CD4-positive, alpha-beta memory T cell (primary cell): ENCODE measurements at regions of chr2 and their contacts with region 1.

Region 1: DNA sequence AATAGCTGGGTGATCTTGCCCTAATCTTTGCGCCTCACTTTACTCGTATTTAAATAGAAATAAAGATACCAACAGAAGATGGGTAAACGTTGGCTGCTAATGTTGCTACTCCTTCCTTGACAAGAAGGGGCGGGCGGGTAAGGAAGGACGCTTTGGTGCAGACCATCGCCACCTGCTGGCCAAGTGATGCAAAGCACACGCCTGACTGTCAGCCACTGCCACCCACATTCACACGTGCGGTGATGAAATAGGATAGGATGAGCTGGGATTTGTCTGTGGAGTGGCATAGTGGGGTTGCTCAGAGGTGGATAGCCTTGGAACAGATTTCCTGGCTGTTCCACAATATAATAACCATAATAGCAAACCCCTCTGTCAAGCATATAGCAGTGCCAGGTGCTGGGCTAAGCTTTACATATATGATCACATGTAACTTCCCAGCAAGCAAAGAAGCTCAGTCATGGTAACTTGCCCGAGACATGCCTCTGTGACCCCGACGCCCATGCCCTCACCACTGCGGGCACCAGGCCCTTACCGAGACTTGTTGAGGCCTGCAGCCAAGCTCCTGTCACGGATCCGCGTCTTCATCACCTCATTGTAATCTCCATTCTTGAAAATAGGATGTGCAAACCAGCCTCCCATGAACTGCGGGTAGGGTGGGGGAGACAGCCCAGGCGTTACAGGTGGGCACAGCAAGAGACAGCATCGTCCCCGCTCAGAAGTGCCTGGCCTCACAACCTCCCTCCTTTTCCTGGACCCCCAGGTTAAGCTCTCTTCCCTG is 39.3 kb downstream of the LCT start:
- DNase-seq: peak; percentile 68 to 70 (median 70)
- H3K4me3 ChIP-seq: no peak overlapping the region
- H3K4me3 Mint-ChIP-seq: peak overlapping the region in 1 of 8 donors; percentile 14
- H3K27ac ChIP-seq: no peak overlapping the region
- H3K27ac Mint-ChIP-seq: peak overlapping the region in 1 of 7 donors; percentile 80
- H3K4me1 ChIP-seq: peaks cover 4% of the 10 kb centered on the region
- H3K4me1 Mint-ChIP-seq: peaks cover 5 to 11% (median 10%) of the 10 kb centered on the region in 4 donors
- H3K27me3 ChIP-seq: no peaks in the 10 kb centered on the region
- H3K27me3 Mint-ChIP-seq: no peaks in the 10 kb centered on the region

Region 2: DNA sequence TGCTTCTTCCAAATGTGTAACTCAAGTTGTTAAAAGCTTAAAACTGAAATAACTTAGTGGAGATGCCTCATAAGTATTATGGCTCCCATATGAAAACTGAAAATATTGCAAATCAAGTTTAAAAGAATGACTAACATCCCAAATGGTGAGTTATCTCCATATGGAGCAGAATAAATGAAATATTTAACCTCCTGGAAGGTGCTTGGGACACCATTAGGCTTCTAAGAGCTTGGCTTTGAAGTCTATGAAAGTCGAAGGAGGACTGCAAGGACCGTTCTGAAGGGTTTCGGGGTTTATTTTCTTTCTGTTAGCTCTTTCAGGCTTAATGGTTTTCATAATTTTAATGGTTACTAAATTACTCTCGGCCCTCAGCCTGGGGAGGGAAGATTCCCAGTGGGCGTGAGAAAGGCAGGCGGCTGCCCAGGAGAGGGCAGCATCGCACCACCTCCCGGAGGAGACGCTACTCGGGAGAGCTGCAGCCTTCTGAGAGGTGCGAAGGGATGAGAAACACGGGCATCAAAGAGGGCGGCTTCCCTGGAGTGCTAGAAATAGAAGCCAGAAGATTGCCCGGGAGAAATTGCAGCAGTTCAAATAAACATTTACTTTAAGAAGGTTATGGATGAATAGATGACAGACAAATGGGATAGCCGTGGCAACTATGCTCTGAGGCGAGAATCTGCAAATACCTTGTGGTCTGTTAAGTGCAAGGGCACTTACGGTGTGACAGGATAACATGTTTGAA is 793.5 kb before region 1 on chr2:
- CTCF ChIA-PET with region 1: interaction called, 39 read pairs
- POLR2A ChIA-PET with region 1: no interaction called
- intact Hi-C with region 1: loop called (anchors 1 kb)
- DNase-seq: peak; percentile 48 to 67 (median 62)
- H3K4me3 ChIP-seq: no peak overlapping the region
- H3K4me3 Mint-ChIP-seq: peak overlapping the region in 3 of 8 donors; percentile 8 to 20 (median 17)
- H3K27ac ChIP-seq: no peak overlapping the region
- H3K27ac Mint-ChIP-seq: peak overlapping the region in 1 of 7 donors; percentile 52
- H3K4me1 ChIP-seq: no peaks in the 10 kb centered on the region
- H3K4me1 Mint-ChIP-seq: peaks cover 2 to 6% (median 5%) of the 10 kb centered on the region in 4 donors
- H3K27me3 ChIP-seq: no peaks in the 10 kb centered on the region
- H3K27me3 Mint-ChIP-seq: peaks cover 8 to 20% of the 10 kb centered on the region in 2 donors

Region 3: DNA sequence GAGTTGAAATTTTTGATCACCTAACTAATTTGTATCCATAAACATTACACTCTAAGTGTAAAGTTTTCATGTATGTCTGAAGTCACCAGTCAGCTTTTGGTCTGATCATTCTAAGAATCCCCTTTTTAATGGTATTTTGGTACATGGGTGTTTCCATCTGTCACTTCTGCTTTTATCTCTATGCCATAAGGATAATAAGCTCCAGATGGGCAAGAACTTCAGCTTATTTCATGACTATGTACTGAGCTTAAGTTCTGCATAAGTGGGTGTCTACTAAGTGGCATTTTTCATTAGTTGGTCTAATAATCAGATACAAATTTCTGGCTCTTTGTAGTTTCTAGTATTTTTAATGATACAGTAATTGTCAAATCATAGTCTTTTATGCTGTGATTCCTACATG is 35.7 kb before region 1 on chr2:
- CTCF ChIA-PET with region 1: interaction called, 12 read pairs
- POLR2A ChIA-PET with region 1: interaction called, 3 read pairs
- intact Hi-C with region 1: no loop called
- DNase-seq: no peak
- H3K4me3 ChIP-seq: no peak overlapping the region
- H3K4me3 Mint-ChIP-seq: no peak overlapping the region
- H3K27ac ChIP-seq: no peak overlapping the region
- H3K27ac Mint-ChIP-seq: no peak overlapping the region
- H3K4me1 ChIP-seq: no peaks in the 10 kb centered on the region
- H3K4me1 Mint-ChIP-seq: peaks cover 0 to 7% (median 3%) of the 10 kb centered on the region in 4 donors
- H3K27me3 ChIP-seq: no peaks in the 10 kb centered on the region
- H3K27me3 Mint-ChIP-seq: no peaks in the 10 kb centered on the region

Region 4: DNA sequence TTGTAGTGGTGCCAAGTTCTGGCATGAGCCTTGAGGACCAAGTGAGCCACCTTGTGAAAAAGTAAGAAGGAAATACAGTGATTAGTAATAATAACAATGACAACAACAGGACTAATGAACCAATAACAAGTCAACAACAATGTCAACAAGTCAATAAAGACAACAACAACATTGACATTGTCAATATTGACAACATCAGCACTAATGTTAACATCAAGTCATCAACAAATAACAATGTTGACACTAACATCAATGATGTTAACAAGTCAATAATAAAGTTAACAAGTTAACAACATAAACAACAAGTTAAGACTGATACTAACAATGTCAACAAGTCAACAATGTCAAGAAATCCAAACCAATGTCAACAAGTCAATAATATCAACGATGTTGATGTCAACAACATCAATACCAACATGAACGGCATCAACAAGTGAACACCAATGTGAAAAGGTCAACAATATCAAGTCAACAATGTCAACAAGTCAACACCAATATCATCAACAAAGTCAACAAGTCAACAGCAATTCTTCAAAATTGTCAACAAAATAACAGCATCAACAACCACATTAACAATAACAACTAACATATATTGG is 15.3 kb after region 1 on chr2:
- CTCF ChIA-PET with region 1: interaction called, 34 read pairs
- POLR2A ChIA-PET with region 1: no interaction called
- intact Hi-C with region 1: no loop called
- DNase-seq: no peak
- H3K4me3 ChIP-seq: no peak overlapping the region
- H3K4me3 Mint-ChIP-seq: no peak overlapping the region
- H3K27ac ChIP-seq: no peak overlapping the region
- H3K27ac Mint-ChIP-seq: no peak overlapping the region
- H3K4me1 ChIP-seq: no peaks in the 10 kb centered on the region
- H3K4me1 Mint-ChIP-seq: no peaks in the 10 kb centered on the region
- H3K27me3 ChIP-seq: no peaks in the 10 kb centered on the region
- H3K27me3 Mint-ChIP-seq: no peaks in the 10 kb centered on the region

Region 5: DNA sequence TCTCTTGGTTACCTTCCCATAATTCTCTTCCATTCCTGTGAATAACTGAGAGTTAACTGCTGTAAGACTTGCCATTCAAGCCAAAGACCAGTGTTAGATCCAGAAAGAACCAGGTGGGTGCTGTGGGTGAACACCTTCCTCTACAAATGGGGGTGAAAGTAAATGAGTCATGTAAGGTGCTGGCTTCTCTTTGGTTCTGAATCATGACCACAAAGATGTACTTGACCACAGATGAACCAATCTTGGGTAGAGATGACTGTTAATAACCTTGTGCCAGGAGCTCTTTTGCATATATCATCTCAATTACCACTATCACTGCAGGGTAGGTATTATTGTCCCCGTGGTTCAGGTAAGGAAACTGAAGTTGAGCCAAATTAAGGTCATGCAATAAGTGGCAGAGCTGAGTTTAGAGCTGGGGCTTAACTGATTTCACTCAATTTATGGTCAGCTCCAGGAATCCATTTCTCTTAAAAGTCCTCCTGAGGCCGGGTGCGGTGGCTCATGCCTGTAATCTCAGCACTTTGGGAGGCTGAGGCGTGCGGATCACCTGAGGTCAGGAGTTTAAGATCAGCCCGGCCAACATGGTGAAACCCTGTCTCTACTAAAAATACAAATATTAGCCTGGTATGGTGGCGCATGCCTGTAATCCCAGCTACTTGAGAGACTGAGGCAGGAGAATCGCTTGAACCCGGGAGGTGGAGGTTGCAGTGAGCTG is 565.1 kb after region 1 on chr2:
- CTCF ChIA-PET with region 1: no interaction called
- POLR2A ChIA-PET with region 1: no interaction called
- intact Hi-C with region 1: no loop called
- DNase-seq: peak in 1 of 5 donors; percentile 47
- H3K4me3 ChIP-seq: no peak overlapping the region
- H3K4me3 Mint-ChIP-seq: peak overlapping the region in 2 of 8 donors; percentile 6 to 37
- H3K27ac ChIP-seq: no peak overlapping the region
- H3K27ac Mint-ChIP-seq: peak overlapping the region in 4 of 7 donors; percentile 10 to 52 (median 38)
- H3K4me1 ChIP-seq: peaks cover 8% of the 10 kb centered on the region
- H3K4me1 Mint-ChIP-seq: peaks cover 12 to 20% (median 16%) of the 10 kb centered on the region in 4 donors
- H3K27me3 ChIP-seq: no peaks in the 10 kb centered on the region
- H3K27me3 Mint-ChIP-seq: no peaks in the 10 kb centered on the region